HEK293 (cell line): ENCODE measurements at regions of chr21 and their contacts with region 1.

Region 1: GRCh38 chr21:41777951-41778874 is 11.4 kb upstream of the RIPK4 start:
- H3K4me3 ChIP-seq: no peak overlapping the region
- H3K27ac ChIP-seq: no peak overlapping the region; the same call in 1 of the 2 replicates
- H3K4me1 ChIP-seq: peaks cover 15% of the 10 kb centered on the region; the same call in 1 of the 2 replicates
- CTCF ChIP-seq: peak; percentile 71

Region 2: DNA sequence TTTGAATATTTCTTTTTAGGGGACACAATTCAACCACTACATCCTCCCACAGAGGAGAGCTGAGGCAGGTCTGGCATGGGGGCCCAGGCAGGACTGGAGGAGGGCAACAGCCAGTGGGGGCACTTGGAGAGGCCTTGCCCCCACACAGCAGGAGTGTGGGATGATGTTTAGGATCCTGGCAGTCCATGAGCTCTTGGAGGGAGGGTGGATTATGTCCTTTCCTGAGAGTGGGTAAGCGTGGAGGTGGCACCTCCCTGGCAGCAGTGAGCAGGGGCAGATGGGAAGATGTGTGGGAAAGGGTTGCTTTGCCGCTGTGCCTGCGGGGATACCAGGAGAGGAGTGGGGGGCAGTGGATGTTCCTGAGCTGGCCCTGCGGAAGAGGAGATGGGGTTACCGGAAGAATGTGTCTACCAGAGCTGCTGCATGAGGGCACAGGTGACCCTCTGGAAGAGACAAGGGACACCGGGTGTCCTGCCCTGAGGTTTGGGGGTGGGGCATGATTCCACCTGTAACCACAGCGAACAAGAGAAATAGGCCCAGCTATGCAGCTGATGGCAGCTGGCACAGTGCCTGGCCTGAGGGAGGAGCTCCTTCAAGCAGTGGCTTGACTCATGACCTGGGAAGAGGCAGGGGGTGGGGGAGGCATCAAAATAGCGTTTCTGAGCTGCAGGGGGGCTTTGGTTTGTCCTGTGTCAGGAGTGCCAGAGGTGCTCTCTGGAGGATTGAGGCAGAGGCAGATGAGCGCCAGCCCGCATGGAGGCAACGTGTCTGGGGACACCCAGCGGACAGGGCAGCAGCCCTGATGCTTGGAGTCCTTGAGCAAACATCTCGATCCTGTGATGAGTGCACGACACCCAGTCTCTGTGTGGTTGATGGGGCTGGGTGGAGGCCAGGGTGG is 146.4 kb before region 1 on chr21:
- CTCF ChIA-PET with region 1: interaction called, 10 read pairs
- POLR2A ChIA-PET with region 1: no interaction called
- H3K4me3 ChIP-seq: no peak overlapping the region
- H3K27ac ChIP-seq: no peak overlapping the region
- H3K4me1 ChIP-seq: peaks cover 7% of the 10 kb centered on the region
- CTCF ChIP-seq: no peak